Activated T-helper 1 cell treated with anti-CD3 and anti-CD28 coated beads, Interleukin-12 subunit alpha, Interleukin-12 subunit beta, Interleukin-2, Interleukin-4 antibody, amounts not matched to agents 30 ng/mL and 10 ng/mL and 1 ng/mL, durations not matched to agents 14 hours and 24 hours and 36 hours (primary cell): ENCODE measurements at regions of chr13 and their contacts with region 1.

Region 1: GRCh38 chr13:78978381-78978998 is 319.5 kb upstream of the OBI1 start:
- DNase-seq: peak; percentile 4
- H3K4me3 Mint-ChIP-seq: no peak overlapping the region
- H3K27ac Mint-ChIP-seq: no peak overlapping the region
- H3K4me1 Mint-ChIP-seq: no peaks in the 10 kb centered on the region
- H3K27me3 Mint-ChIP-seq: peaks cover 12% of the 10 kb centered on the region

Region 2: GRCh38 chr13:78137404-78138142 is 840.9 kb before region 1 on chr13:
- intact Hi-C with region 1: loop called (anchors 1 kb)
- DNase-seq: no peak
- H3K4me3 Mint-ChIP-seq: no peak overlapping the region
- H3K27ac Mint-ChIP-seq: no peak overlapping the region
- H3K4me1 Mint-ChIP-seq: peaks cover 5% of the 10 kb centered on the region
- H3K27me3 Mint-ChIP-seq: peaks cover 2% of the 10 kb centered on the region

Region 3: DNA sequence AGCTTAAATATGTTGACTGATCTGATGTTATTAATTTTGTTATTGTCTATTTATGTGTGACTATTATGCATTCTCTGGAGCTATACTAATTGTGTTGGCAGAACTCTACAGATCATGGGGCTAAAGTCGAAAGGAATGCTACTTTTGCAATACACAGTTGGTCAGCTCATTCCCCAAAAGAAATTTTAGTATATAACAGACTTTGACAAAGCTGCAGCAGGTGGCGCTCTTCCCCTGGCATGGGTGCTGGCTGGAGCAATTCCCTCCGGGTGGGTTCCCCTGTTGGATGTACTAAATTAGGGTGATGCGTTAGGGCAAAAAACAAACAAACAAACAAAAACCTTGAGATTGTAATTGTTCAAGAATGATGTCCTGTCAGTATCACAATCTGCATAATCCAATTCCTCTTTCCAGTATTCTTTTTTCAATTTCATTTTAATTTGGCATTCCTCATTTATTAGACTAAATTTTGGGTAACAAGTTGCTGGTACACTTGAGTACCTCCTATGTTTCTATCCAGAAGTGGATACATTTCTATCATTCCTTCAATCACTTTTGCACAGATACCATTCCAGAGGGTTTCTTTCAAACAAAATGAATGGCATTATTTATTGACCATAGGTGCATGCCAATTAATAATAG is 737.1 kb before region 1 on chr13:
- intact Hi-C with region 1: loop called (anchors 1 kb)
- DNase-seq: no peak
- H3K4me3 Mint-ChIP-seq: no peak overlapping the region
- H3K27ac Mint-ChIP-seq: no peak overlapping the region
- H3K4me1 Mint-ChIP-seq: no peaks in the 10 kb centered on the region
- H3K27me3 Mint-ChIP-seq: no peaks in the 10 kb centered on the region

Region 4: GRCh38 chr13:78603240-78603957 is 375.1 kb before region 1 on chr13 and contains the start of gene POU4F1:
- intact Hi-C with region 1: loop called (anchors 5 kb)
- DNase-seq: peak; percentile 67
- H3K4me3 Mint-ChIP-seq: peak within 1 kb of the TSS; percentile 71
- H3K27ac Mint-ChIP-seq: peak within 1 kb of the TSS; percentile 82
- H3K4me1 Mint-ChIP-seq: peaks cover 34% of the 10 kb centered on the region
- H3K27me3 Mint-ChIP-seq: peaks cover 88% of the 10 kb centered on the region
- total RNA-seq, gene POU4F1: 0.23 and 0.29 TPM in 2 replicates

Region 5: GRCh38 chr13:79246578-79246949 is 268.1 kb after region 1 on chr13:
- intact Hi-C with region 1: loop called (anchors 5 kb)
- DNase-seq: no peak
- H3K4me3 Mint-ChIP-seq: no peak overlapping the region
- H3K27ac Mint-ChIP-seq: no peak overlapping the region
- H3K4me1 Mint-ChIP-seq: no peaks in the 10 kb centered on the region
- H3K27me3 Mint-ChIP-seq: peaks cover 3% of the 10 kb centered on the region